Activated T-helper 1 cell treated with anti-CD3 and anti-CD28 coated beads, Interleukin-12 subunit alpha, Interleukin-12 subunit beta, Interleukin-2, Interleukin-4 antibody, amounts not matched to agents 30 ng/mL and 10 ng/mL and 1 ng/mL, durations not matched to agents 14 hours and 24 hours and 36 hours (primary cell): ENCODE measurements at regions of chr2 and their contacts with region 1.

Region 1: DNA sequence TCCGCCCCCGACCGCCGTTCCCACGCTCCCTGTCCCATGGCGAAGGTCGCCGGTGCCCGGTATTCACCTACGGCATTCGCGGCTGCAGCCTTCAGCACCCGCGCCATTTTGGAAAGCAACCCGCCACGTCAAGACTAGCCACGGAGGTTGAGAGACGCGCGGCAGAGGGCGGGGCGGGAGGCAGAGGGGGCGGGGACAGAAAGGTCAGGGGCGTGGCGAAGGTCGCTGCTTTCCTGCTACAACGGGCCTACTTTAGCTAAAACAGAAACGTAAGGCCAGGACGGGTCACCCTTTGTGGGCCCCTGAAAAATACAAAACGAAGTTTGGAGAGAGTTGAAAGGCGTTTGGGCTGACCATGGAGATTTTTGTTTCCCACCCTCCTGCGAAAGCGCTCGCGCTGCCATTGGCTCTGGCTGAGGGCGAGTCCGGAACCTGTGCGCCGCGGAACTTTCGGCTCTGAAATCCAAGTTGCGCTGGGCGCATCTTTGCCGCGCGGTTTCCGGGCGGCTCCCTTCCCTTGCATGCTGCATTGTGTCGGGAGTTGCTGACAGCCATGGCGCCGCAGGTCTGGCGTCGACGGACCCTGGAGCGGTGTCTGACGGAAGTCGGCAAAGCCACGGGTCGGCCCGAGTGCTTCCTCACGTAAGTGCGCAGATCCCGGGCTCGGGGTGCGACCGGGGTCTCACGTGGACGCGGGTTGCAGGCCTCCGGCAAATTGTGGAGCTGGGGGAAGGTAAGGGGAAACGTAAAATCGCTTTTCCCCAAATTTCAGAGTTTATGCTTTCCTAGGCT is at the starts of genes MCEE and MPHOSPH10:
- DNase-seq: peak; percentile 89
- H3K4me3 Mint-ChIP-seq: no peak within 1 kb of the TSS
- H3K27ac Mint-ChIP-seq: peak within 1 kb of the TSS; percentile 69
- H3K4me1 Mint-ChIP-seq: peaks cover 11% of the 10 kb centered on the region
- H3K27me3 Mint-ChIP-seq: no peaks in the 10 kb centered on the region
- total RNA-seq, gene MCEE: 11.4 and 14.7 TPM in 2 replicates
- total RNA-seq, gene MPHOSPH10: 67.5 and 68.8 TPM in 2 replicates

Region 2: GRCh38 chr2:70977605-70978205 is 152.6 kb before region 1 on chr2:
- intact Hi-C with region 1: loop called (anchors 5 kb)
- DNase-seq: no peak
- H3K4me3 Mint-ChIP-seq: peak overlapping the region; percentile 78
- H3K27ac Mint-ChIP-seq: no peak overlapping the region
- H3K4me1 Mint-ChIP-seq: peaks cover 18% of the 10 kb centered on the region
- H3K27me3 Mint-ChIP-seq: peaks cover under 1% of the 10 kb centered on the region

Region 3: DNA sequence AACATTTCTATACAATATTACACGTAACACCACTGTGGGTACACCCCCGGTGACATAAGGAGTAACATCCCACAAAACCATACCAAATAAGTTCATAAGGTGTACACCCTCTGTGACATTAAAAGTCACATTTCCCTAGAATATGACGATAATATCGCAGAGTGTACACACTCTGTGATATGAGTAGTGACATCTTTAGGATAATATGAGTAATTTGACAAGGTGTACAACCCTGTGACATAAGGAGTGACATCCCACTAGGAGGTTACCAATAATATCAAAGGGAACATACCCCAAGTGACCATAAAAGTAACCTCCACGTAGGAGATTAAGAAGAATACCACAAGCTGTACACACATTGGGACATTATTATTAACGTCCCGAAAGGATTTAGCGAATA is 111.7 kb before region 1 on chr2:
- intact Hi-C with region 1: loop called (anchors 1 kb)
- DNase-seq: no peak
- H3K4me3 Mint-ChIP-seq: no peak overlapping the region
- H3K27ac Mint-ChIP-seq: no peak overlapping the region
- H3K4me1 Mint-ChIP-seq: peaks cover 7% of the 10 kb centered on the region
- H3K27me3 Mint-ChIP-seq: no peaks in the 10 kb centered on the region

Region 4: GRCh38 chr2:71100195-71100964 is 29.9 kb before region 1 on chr2:
- intact Hi-C with region 1: loop called (anchors 1 kb)
- DNase-seq: peak; percentile 5
- H3K4me3 Mint-ChIP-seq: no peak overlapping the region
- H3K27ac Mint-ChIP-seq: no peak overlapping the region
- H3K4me1 Mint-ChIP-seq: no peaks in the 10 kb centered on the region
- H3K27me3 Mint-ChIP-seq: peaks cover 10% of the 10 kb centered on the region

Region 5: GRCh38 chr2:71331581-71332434 is 201.5 kb after region 1 on chr2 and contains the start of gene ZNF638:
- intact Hi-C with region 1: loop called (anchors 1 kb)
- DNase-seq: peak; percentile 90
- H3K4me3 Mint-ChIP-seq: peak within 1 kb of the TSS; percentile 99
- H3K27ac Mint-ChIP-seq: peak within 1 kb of the TSS; percentile 100
- H3K4me1 Mint-ChIP-seq: peaks cover 27% of the 10 kb centered on the region
- H3K27me3 Mint-ChIP-seq: peaks cover 6% of the 10 kb centered on the region
- total RNA-seq, gene ZNF638: 88.8 and 96.8 TPM in 2 replicates